Right cardiac atrium (tissue), 5 donors: ENCODE measurements at regions of chr5 and their contacts with region 1.

Region 1: GRCh38 chr5:80672140-80672736 is 17.5 kb upstream of the DHFR start:
- DNase-seq: peak; percentile 71 to 79 (median 75)
- ATAC-seq: peak; percentile 72 to 74
- H3K4me3 ChIP-seq: no peak overlapping the region
- H3K27ac ChIP-seq: no peak overlapping the region
- H3K4me1 ChIP-seq: peaks cover 3% of the 10 kb centered on the region
- H3K27me3 ChIP-seq: no peaks in the 10 kb centered on the region

Region 2: GRCh38 chr5:80487829-80488721 is 184.2 kb before region 1 on chr5 and contains the start of gene FAM151B:
- intact Hi-C with region 1: loop called in 2 of 4 experiments (anchors 5 to 10 kb)
- DNase-seq: peak; percentile 81 to 93 (median 92)
- ATAC-seq: peak; percentile 95 to 96
- H3K4me3 ChIP-seq: peak within 1 kb of the TSS; percentile 73
- H3K27ac ChIP-seq: peak within 1 kb of the TSS; percentile 37
- H3K4me1 ChIP-seq: no peaks in the 10 kb centered on the region
- H3K27me3 ChIP-seq: no peaks in the 10 kb centered on the region
- total RNA-seq, gene FAM151B: 2.0 to 3.4 (median 2.3) TPM

Region 3: GRCh38 chr5:81187885-81188284 is 515.6 kb after region 1 on chr5:
- intact Hi-C with region 1: loop called in 1 of 4 experiments (anchors 10 kb)
- DNase-seq: peak; percentile 53 to 85 (median 76)
- ATAC-seq: peak; percentile 67 to 71
- H3K4me3 ChIP-seq: no peak overlapping the region
- H3K27ac ChIP-seq: peak overlapping the region; percentile 30
- H3K4me1 ChIP-seq: no peaks in the 10 kb centered on the region
- H3K27me3 ChIP-seq: no peaks in the 10 kb centered on the region

Region 4: DNA sequence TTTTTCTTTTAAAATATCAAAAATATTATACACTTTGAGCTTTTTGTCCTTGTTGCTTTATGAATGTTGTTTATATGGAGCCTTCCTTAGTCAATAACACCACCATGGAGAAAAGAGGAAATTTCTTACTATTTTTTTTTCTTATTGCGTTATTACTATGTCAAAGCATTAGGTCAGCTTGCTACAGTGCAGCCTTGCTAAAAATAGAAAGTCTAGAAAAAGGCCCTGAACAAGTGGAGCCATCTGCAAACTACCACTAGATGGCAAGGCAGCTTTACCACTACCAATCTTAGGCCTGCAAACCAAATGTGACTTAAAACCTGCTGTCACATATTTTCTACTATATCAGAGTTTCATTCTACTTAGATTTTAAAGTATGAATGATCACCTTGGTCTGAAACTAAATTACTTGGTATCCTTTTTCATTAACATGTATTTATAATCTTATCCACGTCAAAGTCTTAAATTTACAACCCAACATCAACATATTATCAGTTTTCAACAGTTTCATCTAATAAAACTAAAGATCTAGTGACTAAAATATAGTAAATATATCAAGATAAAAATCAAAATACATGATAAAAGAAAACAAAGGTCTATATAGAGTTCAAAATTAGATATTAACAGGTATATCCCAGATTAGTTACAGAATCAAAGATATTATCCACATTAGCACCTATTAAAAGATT is 834.8 kb after region 1 on chr5:
- intact Hi-C with region 1: no loop called
- DNase-seq: peak in 2 of 3 donors; percentile 36 to 43
- ATAC-seq: peak; percentile 98
- H3K4me3 ChIP-seq: no peak overlapping the region
- H3K27ac ChIP-seq: no peak overlapping the region
- H3K4me1 ChIP-seq: no peaks in the 10 kb centered on the region
- H3K27me3 ChIP-seq: no peaks in the 10 kb centered on the region